CD14-positive monocyte (primary cell): ENCODE measurements at regions of chr20 and their contacts with region 1.

Region 1: GRCh38 chr20:37534401-37535157 is 6.9 kb upstream of the BLCAP start:
- DNase-seq: peak; percentile 68 to 83 (median 72)
- H3K4me3 ChIP-seq: no peak overlapping the region
- H3K4me3 Mint-ChIP-seq: no peak overlapping the region
- H3K27ac ChIP-seq: no peak overlapping the region
- H3K27ac Mint-ChIP-seq: peak overlapping the region in 3 of 7 donors; percentile 5 to 54 (median 43)
- H3K4me1 ChIP-seq: peaks cover 0 to 7% of the 10 kb centered on the region in 2 donors
- H3K4me1 Mint-ChIP-seq: peaks cover 13% of the 10 kb centered on the region
- H3K27me3 ChIP-seq: no peaks in the 10 kb centered on the region
- H3K27me3 Mint-ChIP-seq: peaks cover 2 to 4% (median 4%) of the 10 kb centered on the region in 3 donors
- CTCF ChIP-seq: peak; percentile 84

Region 2: DNA sequence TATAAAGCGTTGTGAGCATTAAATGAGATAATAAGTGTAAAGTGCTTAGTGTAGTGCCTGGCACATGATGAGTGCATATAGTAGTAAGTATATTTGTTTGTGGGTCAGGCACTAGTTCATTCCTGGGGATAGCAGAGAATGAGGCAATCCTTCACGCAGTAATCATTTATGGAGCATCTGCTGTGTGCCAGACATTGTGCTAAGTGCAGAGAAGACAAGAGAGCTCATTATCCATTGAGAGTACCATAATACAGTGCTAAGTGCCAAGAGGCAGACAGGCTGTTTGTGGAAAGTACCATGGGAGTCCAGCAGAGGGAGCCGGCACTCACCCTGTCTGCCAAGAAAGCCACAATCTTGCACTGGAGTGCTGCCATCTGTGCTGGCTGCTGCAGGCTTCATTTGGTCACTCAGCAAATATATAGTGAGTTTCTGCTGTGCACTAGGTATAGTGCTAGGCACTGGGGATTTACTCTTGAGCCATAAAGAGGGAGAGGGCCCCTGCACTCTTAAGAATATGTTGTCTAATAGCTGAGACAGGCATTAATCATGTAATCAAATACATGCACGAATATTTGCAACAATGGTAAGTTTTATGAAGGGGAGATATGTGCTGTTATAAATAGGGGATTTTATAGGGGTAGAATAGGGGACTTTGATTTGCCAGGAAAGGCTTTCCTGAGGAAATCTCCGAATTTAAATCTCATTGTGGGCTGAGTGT is 342.3 kb before region 1 on chr20:
- intact Hi-C with region 1: loop called (anchors 2 kb)
- DNase-seq: peak; percentile 38 to 62 (median 59)
- H3K4me3 ChIP-seq: no peak overlapping the region
- H3K4me3 Mint-ChIP-seq: no peak overlapping the region
- H3K27ac ChIP-seq: peak overlapping the region in 1 of 2 donors; percentile 31
- H3K27ac Mint-ChIP-seq: peak overlapping the region in 2 of 7 donors; percentile 22 to 63
- H3K4me1 ChIP-seq: no peaks in the 10 kb centered on the region
- H3K4me1 Mint-ChIP-seq: peaks cover 36% of the 10 kb centered on the region
- H3K27me3 ChIP-seq: no peaks in the 10 kb centered on the region
- H3K27me3 Mint-ChIP-seq: no peaks in the 10 kb centered on the region
- CTCF ChIP-seq: peak; percentile 96

Region 3: DNA sequence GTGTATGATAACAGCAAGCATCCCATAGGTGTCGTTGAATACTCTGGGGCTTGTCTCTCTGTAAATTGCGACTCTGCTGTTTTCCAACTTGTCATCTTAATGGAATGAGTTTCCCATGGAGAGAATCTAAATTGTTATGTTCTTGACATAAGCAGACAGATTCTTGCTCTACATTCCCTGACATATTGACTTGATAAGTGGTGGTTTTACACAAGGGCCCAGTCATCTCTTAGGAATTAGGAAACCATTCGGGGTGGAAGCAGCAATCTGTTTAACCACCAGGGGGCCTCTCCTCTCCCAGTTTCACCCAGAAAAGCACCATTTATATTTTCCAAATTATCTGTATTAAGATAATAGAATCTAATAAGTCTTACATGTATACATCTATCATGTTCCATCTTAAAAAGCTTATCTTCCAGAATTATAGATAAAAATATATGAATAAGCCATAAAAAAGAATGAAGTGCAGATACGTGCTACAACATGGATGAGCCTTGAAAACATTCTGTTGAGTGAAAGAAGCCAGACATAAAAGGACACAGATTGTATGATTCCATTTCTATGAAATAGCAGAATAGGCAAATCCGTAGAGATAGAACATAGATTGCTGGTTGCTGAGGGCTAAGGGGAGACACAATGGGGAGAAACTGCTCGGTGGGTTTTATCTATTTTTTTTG is 332.2 kb before region 1 on chr20:
- intact Hi-C with region 1: loop called in 1 of 2 experiments (anchors 2 kb)
- DNase-seq: peak in 2 of 3 donors; percentile 41 to 50
- H3K4me3 ChIP-seq: no peak overlapping the region
- H3K4me3 Mint-ChIP-seq: no peak overlapping the region
- H3K27ac ChIP-seq: no peak overlapping the region
- H3K27ac Mint-ChIP-seq: peak overlapping the region in 3 of 7 donors; percentile 40 to 57 (median 57)
- H3K4me1 ChIP-seq: no peaks in the 10 kb centered on the region
- H3K4me1 Mint-ChIP-seq: no peaks in the 10 kb centered on the region
- H3K27me3 ChIP-seq: no peaks in the 10 kb centered on the region
- H3K27me3 Mint-ChIP-seq: no peaks in the 10 kb centered on the region
- CTCF ChIP-seq: peak; percentile 81

Region 4: GRCh38 chr20:37755665-37756064 is 221.1 kb after region 1 on chr20:
- intact Hi-C with region 1: no loop called
- DNase-seq: no peak
- H3K4me3 ChIP-seq: no peak overlapping the region
- H3K4me3 Mint-ChIP-seq: no peak overlapping the region
- H3K27ac ChIP-seq: no peak overlapping the region
- H3K27ac Mint-ChIP-seq: no peak overlapping the region
- H3K4me1 ChIP-seq: no peaks in the 10 kb centered on the region
- H3K4me1 Mint-ChIP-seq: no peaks in the 10 kb centered on the region
- H3K27me3 ChIP-seq: no peaks in the 10 kb centered on the region
- H3K27me3 Mint-ChIP-seq: no peaks in the 10 kb centered on the region
- CTCF ChIP-seq: no peak